ENCODE measurements at regions of chr4 and their contacts with region 1.

Region 1: DNA sequence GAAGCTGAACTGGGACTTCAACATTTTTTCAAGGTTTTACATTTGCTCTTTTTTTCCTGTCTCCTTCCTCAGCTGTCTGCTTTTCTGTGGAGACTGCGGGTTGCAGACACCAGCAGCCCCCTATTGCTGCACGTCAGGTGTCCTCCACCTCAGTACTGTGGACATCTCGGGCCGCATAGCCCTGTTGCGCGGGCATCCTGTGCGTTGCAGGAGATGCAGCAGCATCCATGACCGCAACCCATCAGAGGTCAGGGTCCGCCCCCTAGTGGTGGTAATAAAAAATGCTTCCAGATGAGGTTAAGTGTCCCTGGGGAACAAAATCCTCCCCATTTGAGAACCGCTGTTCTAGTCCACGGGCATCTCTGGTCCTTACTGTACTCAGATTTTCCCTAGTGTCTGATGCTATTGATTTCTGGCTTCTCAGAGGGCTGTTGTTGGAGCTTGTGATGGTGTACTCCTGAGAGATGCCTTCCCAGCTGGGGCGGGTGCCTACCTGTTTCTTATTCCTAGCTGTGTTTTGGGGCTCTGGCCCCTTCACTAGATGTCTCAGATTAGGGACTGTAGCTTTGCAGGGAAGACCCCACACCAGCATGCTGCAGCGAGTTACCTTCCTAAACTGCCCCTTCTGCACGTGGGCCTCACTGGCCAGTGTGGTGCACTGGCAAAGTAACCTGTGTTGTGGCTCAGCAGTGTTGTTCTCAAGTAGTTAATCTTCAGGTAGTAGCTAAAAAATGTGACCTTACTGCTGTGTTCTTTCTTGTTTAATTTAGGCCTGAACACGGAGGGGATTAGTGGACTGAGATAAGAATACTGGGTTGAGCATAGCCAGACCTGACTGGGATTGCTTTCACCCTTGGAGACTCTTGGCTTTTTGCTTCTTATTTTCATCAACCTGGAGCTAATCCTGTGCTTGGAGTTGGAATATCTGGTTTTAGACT is 28.2 kb downstream of the NSD2 start:
- DNase-seq: peak; percentile 85
- H3K4me3 ChIP-seq: no peak overlapping the region
- H3K27ac ChIP-seq: no peak overlapping the region
- H3K4me1 ChIP-seq: no peaks in the 10 kb centered on the region
- H3K27me3 ChIP-seq: no peaks in the 10 kb centered on the region
- CTCF ChIP-seq: peak; percentile 67 to 93 (median 79)
- EP300 ChIP-seq: no peak
- POLR2A ChIP-seq: no peak

Region 2: DNA sequence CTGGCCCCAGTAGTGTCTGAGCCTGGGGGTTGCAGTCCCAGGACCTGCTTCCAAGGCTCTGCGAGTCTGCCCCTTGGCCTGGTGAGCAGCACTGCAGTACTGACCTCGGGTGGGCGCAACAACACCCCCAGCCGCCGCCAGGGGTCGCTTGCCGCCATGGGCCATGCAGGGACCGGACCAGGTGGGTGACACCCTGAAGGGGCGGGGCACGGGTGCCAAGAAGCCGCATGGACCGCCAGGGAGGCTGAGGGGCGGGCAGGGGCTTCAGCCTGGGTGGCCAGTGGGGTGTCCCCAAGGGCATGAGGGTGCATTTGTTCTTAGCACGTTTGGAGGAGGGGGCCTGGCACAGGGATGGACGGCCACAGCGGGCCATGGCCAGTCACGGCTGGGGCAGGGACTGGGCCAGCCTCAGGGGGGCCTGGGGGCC is 153.1 kb before region 1 on chr4:
- intact Hi-C with region 1: loop called (anchors 1 kb)
- DNase-seq: peak; percentile 78
- H3K4me3 ChIP-seq: no peak overlapping the region
- H3K27ac ChIP-seq: no peak overlapping the region
- H3K4me1 ChIP-seq: peaks cover 0 to 7% (median 2%) of the 10 kb centered on the region in 4 donors
- H3K27me3 ChIP-seq: peaks cover 0 to 12% (median 5%) of the 10 kb centered on the region in 3 donors
- CTCF ChIP-seq: peak; percentile 48 to 79 (median 61)
- EP300 ChIP-seq: no peak
- POLR2A ChIP-seq: no peak

Region 3: DNA sequence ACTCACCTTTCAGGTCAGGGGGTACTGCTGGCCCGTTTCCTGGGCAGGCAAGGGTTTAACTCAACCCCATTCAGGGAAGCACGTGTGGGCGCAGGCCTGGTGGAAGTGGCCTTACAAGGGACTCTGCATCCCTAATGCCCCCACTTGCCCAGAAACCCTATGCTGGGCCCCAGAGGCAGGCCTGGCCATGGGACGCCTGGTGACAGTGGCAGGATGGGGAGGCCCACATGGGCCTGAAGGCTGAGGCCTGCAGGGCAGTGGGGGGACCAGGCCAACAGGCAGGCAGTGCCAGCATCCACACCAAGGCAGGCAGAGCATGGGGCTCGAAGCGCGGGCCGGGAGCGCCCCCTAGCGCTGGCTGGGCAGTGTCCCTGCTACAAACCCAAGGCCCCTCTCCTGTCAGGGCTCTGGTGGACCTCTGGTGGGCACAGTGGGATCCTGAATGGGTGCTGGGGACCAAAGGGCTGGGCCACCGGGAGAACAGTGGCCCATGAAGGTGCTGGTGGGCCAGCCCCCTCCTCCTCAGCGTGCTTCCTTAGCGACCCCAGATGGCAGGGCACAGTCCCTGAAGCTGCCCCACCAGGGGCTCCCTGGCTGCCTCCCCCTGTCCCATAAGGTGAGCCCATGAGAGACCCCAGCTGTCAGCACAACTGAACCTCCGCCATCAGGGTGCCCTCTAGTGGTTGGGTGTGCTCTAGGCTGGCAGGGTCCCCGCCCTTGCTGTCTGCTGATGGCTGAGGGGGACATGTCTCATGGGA is 89.5 kb before region 1 on chr4:
- intact Hi-C with region 1: loop called (anchors 5 kb)
- DNase-seq: peak; percentile 80
- H3K4me3 ChIP-seq: no peak overlapping the region
- H3K27ac ChIP-seq: no peak overlapping the region
- H3K4me1 ChIP-seq: peaks cover 0 to 22% (median 10%) of the 10 kb centered on the region in 4 donors
- H3K27me3 ChIP-seq: no peaks in the 10 kb centered on the region
- CTCF ChIP-seq: peak; percentile 47 to 85 (median 76)
- EP300 ChIP-seq: no peak
- POLR2A ChIP-seq: no peak

Region 4: DNA sequence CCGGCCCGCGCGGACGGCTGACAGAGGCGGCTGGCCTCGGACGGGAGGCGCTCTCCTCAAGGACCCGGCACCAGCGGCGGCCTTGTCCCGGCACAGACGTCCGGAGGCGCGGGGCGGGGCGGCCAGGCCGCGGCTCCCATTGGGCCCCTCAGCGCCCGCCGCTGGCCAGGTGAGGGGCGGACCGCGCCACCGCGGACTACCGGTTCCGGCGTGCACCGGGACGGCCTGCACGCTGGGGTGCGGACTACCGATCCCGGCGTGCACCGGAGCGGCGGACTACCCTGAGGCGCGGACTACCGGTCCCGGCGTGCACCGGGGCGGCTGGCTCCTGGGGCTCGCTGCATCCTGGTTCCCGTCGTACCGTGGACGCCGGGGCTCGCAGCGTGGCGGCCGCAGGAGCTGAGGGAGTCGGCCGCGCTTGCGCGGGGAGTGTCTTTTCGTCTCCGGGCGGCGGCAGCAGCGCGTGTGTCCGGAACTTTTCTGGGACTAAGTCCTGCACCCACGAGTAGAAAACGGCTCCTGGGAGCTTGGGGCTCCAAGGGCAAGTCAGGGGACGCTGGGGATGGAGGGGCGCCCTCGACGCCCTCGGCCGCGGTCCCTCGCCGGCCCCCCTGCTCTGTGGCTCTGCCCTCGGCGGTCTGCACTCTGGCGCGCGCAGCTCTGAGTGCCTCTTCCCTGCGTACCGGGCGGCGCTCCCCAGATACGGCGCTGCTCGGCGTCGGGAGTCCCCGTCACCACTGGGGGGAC is 43.2 kb before region 1 on chr4 and contains the start of gene LETM1:
- intact Hi-C with region 1: loop called (anchors 5 kb)
- DNase-seq: peak; percentile 98
- H3K4me3 ChIP-seq: peak within 1 kb of the TSS; percentile 70 to 90 (median 76)
- H3K27ac ChIP-seq: peak within 1 kb of the TSS; percentile 83 to 87 (median 86)
- H3K4me1 ChIP-seq: peaks cover 0 to 34% (median 29%) of the 10 kb centered on the region in 4 donors
- H3K27me3 ChIP-seq: no peaks in the 10 kb centered on the region
- CTCF ChIP-seq: peak in 1 of 4 experiments; percentile 0
- EP300 ChIP-seq: no peak
- POLR2A ChIP-seq: peak; percentile 34 to 41
- total RNA-seq, gene LETM1: 15.0 to 22.4 (median 17.8) TPM

Region 5: DNA sequence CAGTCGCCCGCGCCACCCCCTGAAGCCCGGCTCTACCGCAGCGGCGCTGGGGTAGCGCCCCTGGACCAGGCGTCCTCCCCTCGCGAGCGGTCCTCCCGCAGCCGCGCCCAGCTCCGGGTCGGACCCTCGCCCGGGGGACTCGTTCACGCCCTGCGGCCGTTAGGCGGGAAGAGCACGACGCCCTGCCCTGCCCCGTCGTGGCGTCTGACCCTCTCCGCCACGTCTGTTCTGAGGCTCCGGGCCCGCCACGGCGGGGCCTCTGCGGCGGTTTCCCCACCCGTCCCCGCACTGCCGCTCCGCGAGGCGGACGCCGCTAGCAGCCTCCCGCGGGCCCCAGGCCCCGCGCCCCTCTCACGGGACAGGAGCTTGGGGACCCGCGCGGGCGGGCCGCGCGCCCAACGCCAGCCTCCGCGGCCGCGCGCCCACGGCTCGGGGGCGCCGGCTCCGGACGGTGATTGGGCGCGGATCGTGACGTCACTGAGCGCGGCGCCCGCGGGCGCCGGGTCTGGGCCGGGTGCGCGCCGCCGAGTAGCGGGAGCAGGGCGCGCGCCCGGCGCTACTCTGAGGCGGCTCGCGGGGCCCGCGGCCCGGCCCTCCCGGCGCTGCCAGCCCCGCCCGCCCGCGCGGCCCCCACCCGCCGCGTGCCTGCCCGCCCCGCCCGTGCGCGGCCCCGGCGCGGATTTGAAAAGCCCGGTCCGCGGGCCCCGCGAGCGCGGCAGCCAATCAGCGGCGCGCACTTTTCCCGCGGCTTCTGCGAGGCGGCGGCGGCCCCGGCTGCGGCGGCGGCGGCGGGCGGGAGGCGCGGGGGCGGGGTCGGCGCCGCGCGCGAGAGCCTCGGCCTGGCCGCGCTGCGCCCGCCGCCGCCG is 28.6 kb before region 1 on chr4 and contains the start of gene NSD2:
- intact Hi-C with region 1: loop called (anchors 2 kb)
- DNase-seq: peak; percentile 93
- H3K4me3 ChIP-seq: peak within 1 kb of the TSS; percentile 73 to 100 (median 96)
- H3K27ac ChIP-seq: peak within 1 kb of the TSS; percentile 99 to 100 (median 100)
- H3K4me1 ChIP-seq: peaks cover 0 to 31% (median 24%) of the 10 kb centered on the region in 4 donors
- H3K27me3 ChIP-seq: peaks cover 0 to 16% (median 10%) of the 10 kb centered on the region in 3 donors
- CTCF ChIP-seq: no peak
- EP300 ChIP-seq: no peak
- POLR2A ChIP-seq: peak; percentile 37 to 67
- total RNA-seq, gene NSD2: 33.9 to 56.5 (median 38.0) TPM

Region 6: GRCh38 chr4:1960170-1960825 is 60.9 kb after region 1 on chr4:
- intact Hi-C with region 1: no loop called
- DNase-seq: no peak
- H3K4me3 ChIP-seq: no peak overlapping the region
- H3K27ac ChIP-seq: no peak overlapping the region
- H3K4me1 ChIP-seq: no peaks in the 10 kb centered on the region
- H3K27me3 ChIP-seq: no peaks in the 10 kb centered on the region
- CTCF ChIP-seq: no peak
- EP300 ChIP-seq: no peak
- POLR2A ChIP-seq: no peak